ENCODE measurements at regions of chr10 and their contacts with region 1.

Region 1: GRCh38 chr10:103712570-103713498 is 142.5 kb downstream of the SH3PXD2A start:
- DNase-seq: peak; percentile 69 to 78 (median 71)
- H3K4me3 ChIP-seq: no peak overlapping the region
- H3K4me3 Mint-ChIP-seq: no peak overlapping the region
- H3K27ac ChIP-seq: no peak overlapping the region
- H3K27ac Mint-ChIP-seq: peak overlapping the region in 3 of 7 donors; percentile 6 to 56 (median 7)
- H3K4me1 ChIP-seq: no peaks in the 10 kb centered on the region
- H3K4me1 Mint-ChIP-seq: peaks cover 0 to 4% (median 1%) of the 10 kb centered on the region in 4 donors
- H3K27me3 ChIP-seq: no peaks in the 10 kb centered on the region
- H3K27me3 Mint-ChIP-seq: no peaks in the 10 kb centered on the region

Region 2: GRCh38 chr10:103696411-103697145 is 16.3 kb before region 1 on chr10:
- CTCF ChIA-PET with region 1: interaction called, 12 read pairs
- POLR2A ChIA-PET with region 1: interaction called, 3 read pairs
- intact Hi-C with region 1: no loop called
- DNase-seq: peak; percentile 56 to 85 (median 57)
- H3K4me3 ChIP-seq: no peak overlapping the region
- H3K4me3 Mint-ChIP-seq: peak overlapping the region in 7 of 8 donors; percentile 59 to 88 (median 79)
- H3K27ac ChIP-seq: peak overlapping the region; percentile 5
- H3K27ac Mint-ChIP-seq: peak overlapping the region; percentile 55 to 94 (median 92)
- H3K4me1 ChIP-seq: peaks cover 48% of the 10 kb centered on the region
- H3K4me1 Mint-ChIP-seq: peaks cover 16 to 40% (median 25%) of the 10 kb centered on the region in 4 donors
- H3K27me3 ChIP-seq: no peaks in the 10 kb centered on the region
- H3K27me3 Mint-ChIP-seq: no peaks in the 10 kb centered on the region

Region 3: GRCh38 chr10:103745341-103746227 is 32.8 kb after region 1 on chr10:
- CTCF ChIA-PET with region 1: interaction called, 24 read pairs
- POLR2A ChIA-PET with region 1: no interaction called
- intact Hi-C with region 1: loop called (anchors 5 kb)
- DNase-seq: peak; percentile 34 to 76 (median 38)
- H3K4me3 ChIP-seq: peak overlapping the region in 1 of 2 donors; percentile 15
- H3K4me3 Mint-ChIP-seq: peak overlapping the region in 5 of 8 donors; percentile 31 to 75 (median 55)
- H3K27ac ChIP-seq: no peak overlapping the region
- H3K27ac Mint-ChIP-seq: peak overlapping the region; percentile 53 to 95 (median 77)
- H3K4me1 ChIP-seq: peaks cover 45% of the 10 kb centered on the region
- H3K4me1 Mint-ChIP-seq: peaks cover 23 to 54% (median 38%) of the 10 kb centered on the region in 4 donors
- H3K27me3 ChIP-seq: no peaks in the 10 kb centered on the region
- H3K27me3 Mint-ChIP-seq: no peaks in the 10 kb centered on the region

Region 4: GRCh38 chr10:103772096-103772845 is 59.4 kb after region 1 on chr10:
- CTCF ChIA-PET with region 1: interaction called, 5 read pairs
- POLR2A ChIA-PET with region 1: no interaction called
- intact Hi-C with region 1: loop called (anchors 2 kb)
- DNase-seq: peak; percentile 47 to 64 (median 56)
- H3K4me3 ChIP-seq: peak overlapping the region; percentile 83 to 87
- H3K4me3 Mint-ChIP-seq: peak overlapping the region; percentile 88 to 95 (median 92)
- H3K27ac ChIP-seq: peak overlapping the region; percentile 59
- H3K27ac Mint-ChIP-seq: peak overlapping the region; percentile 65 to 93 (median 91)
- H3K4me1 ChIP-seq: peaks cover 31% of the 10 kb centered on the region
- H3K4me1 Mint-ChIP-seq: peaks cover 25 to 54% (median 34%) of the 10 kb centered on the region in 4 donors
- H3K27me3 ChIP-seq: no peaks in the 10 kb centered on the region
- H3K27me3 Mint-ChIP-seq: no peaks in the 10 kb centered on the region

Region 5: DNA sequence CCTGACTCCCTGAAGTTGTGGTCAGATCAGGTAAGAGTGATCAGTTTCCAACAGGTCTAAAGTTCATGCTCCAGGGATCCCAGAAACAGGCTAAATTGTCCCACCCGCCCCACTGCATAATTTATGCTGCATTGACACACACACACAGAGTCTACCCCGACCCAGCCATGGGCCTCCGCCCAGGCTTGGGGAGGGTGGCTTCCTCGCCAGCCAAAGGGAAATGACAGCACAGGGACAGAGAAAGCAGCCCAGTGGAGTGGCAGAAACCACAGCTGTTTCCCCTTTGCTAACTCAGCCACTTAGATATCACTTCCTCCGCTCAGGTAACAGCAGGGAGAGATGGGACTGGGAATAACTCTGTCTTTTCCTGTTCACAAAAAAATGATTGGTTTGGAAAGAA is 133.1 kb after region 1 on chr10:
- CTCF ChIA-PET with region 1: interaction called, 16 read pairs
- POLR2A ChIA-PET with region 1: interaction called, 3 read pairs
- intact Hi-C with region 1: no loop called
- DNase-seq: peak; percentile 27 to 51 (median 48)
- H3K4me3 ChIP-seq: no peak overlapping the region
- H3K4me3 Mint-ChIP-seq: peak overlapping the region in 7 of 8 donors; percentile 38 to 82 (median 74)
- H3K27ac ChIP-seq: no peak overlapping the region
- H3K27ac Mint-ChIP-seq: peak overlapping the region; percentile 56 to 91 (median 80)
- H3K4me1 ChIP-seq: peaks cover 26% of the 10 kb centered on the region
- H3K4me1 Mint-ChIP-seq: peaks cover 15 to 32% (median 25%) of the 10 kb centered on the region in 4 donors
- H3K27me3 ChIP-seq: no peaks in the 10 kb centered on the region
- H3K27me3 Mint-ChIP-seq: peaks cover 2% of the 10 kb centered on the region in 2 donors

Region 6: GRCh38 chr10:103888113-103888841 is 175.4 kb after region 1 on chr10:
- CTCF ChIA-PET with region 1: interaction called, 60 read pairs
- POLR2A ChIA-PET with region 1: no interaction called
- intact Hi-C with region 1: loop called (anchors 1 kb)
- DNase-seq: peak; percentile 43 to 67 (median 66)
- H3K4me3 ChIP-seq: no peak overlapping the region
- H3K4me3 Mint-ChIP-seq: peak overlapping the region in 2 of 8 donors; percentile 40 to 49
- H3K27ac ChIP-seq: peak overlapping the region; percentile 11
- H3K27ac Mint-ChIP-seq: peak overlapping the region in 6 of 7 donors; percentile 36 to 85 (median 68)
- H3K4me1 ChIP-seq: peaks cover 22% of the 10 kb centered on the region
- H3K4me1 Mint-ChIP-seq: peaks cover 16 to 43% (median 29%) of the 10 kb centered on the region in 4 donors
- H3K27me3 ChIP-seq: no peaks in the 10 kb centered on the region
- H3K27me3 Mint-ChIP-seq: no peaks in the 10 kb centered on the region

Region 7: GRCh38 chr10:104005172-104005863 is 292.5 kb after region 1 on chr10:
- CTCF ChIA-PET with region 1: no interaction called
- POLR2A ChIA-PET with region 1: no interaction called
- intact Hi-C with region 1: no loop called
- DNase-seq: no peak
- H3K4me3 ChIP-seq: no peak overlapping the region
- H3K4me3 Mint-ChIP-seq: peak overlapping the region in 1 of 8 donors; percentile 12
- H3K27ac ChIP-seq: no peak overlapping the region
- H3K27ac Mint-ChIP-seq: peak overlapping the region in 3 of 7 donors; percentile 41 to 70 (median 48)
- H3K4me1 ChIP-seq: no peaks in the 10 kb centered on the region
- H3K4me1 Mint-ChIP-seq: peaks cover 5 to 21% (median 12%) of the 10 kb centered on the region in 4 donors
- H3K27me3 ChIP-seq: no peaks in the 10 kb centered on the region
- H3K27me3 Mint-ChIP-seq: no peaks in the 10 kb centered on the region

Region 8: GRCh38 chr10:104209575-104210198 is 496.9 kb after region 1 on chr10:
- CTCF ChIA-PET with region 1: no interaction called
- POLR2A ChIA-PET with region 1: no interaction called
- intact Hi-C with region 1: loop called (anchors 1 kb)
- DNase-seq: peak; percentile 38 to 55 (median 42)
- H3K4me3 ChIP-seq: no peak overlapping the region
- H3K4me3 Mint-ChIP-seq: no peak overlapping the region
- H3K27ac ChIP-seq: no peak overlapping the region
- H3K27ac Mint-ChIP-seq: no peak overlapping the region
- H3K4me1 ChIP-seq: no peaks in the 10 kb centered on the region
- H3K4me1 Mint-ChIP-seq: no peaks in the 10 kb centered on the region
- H3K27me3 ChIP-seq: no peaks in the 10 kb centered on the region
- H3K27me3 Mint-ChIP-seq: peaks cover 7 to 16% of the 10 kb centered on the region in 2 donors